ENCODE measurements at regions of chr10 and their contacts with region 1.

Region 1: DNA sequence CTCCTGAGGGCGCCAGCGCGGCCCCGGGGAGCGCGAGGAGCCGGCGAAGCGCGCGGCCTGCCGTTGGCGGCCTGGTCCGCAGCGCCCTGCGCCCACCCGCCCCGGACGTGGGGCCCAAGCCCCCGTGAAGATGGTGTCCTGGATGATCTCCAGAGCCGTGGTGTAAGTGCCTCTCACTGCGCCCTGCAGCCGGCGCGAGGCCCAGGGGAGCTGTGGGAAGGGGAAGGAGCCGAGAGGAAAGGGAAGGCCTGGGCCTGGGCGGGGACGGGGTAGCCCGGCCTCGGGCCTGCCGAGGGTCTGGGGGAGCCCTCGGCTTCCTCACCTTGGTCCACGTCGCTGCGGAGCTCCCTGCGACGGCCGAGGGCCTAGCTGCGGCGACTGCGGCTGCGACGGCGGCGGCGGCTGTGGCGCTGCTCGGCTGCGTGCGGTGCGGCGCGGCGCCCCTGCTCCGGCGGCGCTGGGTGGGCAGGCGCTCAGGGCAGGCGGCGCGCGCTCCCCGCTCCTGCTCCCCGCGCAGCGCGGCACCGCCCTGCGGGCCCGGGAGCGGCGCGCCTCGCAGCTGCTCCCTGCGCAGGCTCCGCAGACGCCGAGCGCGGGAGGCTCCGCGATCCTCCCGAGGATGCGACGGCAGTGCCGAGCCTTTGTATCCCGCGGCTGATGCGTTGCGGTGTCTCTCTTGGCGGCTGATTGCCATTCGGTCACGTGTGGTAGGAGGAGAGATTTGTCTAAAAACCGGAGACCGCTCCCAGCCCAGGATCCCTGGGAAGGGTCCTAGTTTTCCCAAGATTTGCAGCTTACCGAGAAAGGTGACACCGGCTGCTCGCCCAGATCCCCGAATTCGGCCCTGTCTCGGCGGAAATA is 445 bp downstream of the REEP3 start:
- DNase-seq: peak; percentile 80
- H3K4me3 ChIP-seq: peak overlapping the region; percentile 50 to 93 (median 62)
- H3K27ac ChIP-seq: peak overlapping the region; percentile 90
- H3K4me1 ChIP-seq: peaks cover 7% of the 10 kb centered on the region
- H3K27me3 ChIP-seq: no peaks in the 10 kb centered on the region
- CTCF ChIP-seq: no peak
- POLR2A ChIP-seq: peak; percentile 74

Region 2: DNA sequence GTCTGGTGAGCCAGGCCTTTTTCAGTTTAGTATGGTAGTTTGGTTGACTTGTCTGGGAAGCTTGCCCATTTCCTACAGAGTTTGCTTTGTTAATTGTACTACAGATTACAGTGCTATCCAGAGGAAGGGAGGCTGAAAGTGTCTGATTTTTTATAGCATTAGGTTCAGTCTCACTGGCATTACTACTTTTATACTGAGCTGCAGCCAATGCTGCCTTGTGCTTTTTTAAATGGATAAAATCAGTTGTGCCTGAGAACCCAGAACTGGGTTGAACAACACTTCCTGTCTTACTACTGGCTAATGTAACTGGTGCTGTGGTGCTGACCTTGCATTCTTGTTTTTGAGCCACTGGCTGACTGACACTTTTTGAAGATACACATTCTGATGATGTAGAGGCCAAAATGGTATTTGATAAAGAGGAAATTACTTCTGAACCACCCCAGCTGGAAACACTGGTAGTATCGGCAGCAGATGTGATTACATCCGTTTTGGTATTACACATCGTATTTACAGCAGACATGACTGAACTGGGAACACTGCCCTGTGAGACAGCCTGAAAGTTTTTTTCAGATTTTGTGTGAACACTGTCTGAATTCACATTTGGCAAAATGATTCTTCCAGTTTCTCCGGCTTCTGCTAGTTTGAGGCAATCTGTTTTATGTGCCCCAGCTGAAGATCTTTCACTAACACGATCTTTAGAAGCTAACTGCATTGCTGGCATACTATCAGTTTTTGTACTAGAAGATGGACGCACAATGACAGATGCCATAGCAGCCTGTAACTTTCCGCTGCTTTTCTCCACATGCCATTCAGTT is 314.4 kb before region 1 on chr10:
- CTCF ChIA-PET with region 1: no interaction called
- POLR2A ChIA-PET with region 1: no interaction called
- dilution Hi-C with region 1: no loop called
- intact Hi-C with region 1: loop called (anchors 5 kb)
- DNase-seq: peak; percentile 96
- H3K4me3 ChIP-seq: no peak overlapping the region
- H3K27ac ChIP-seq: peak overlapping the region; percentile 87
- H3K4me1 ChIP-seq: peaks cover 54% of the 10 kb centered on the region
- H3K27me3 ChIP-seq: no peaks in the 10 kb centered on the region
- CTCF ChIP-seq: no peak
- POLR2A ChIP-seq: no peak

Region 3: GRCh38 chr10:63573068-63573697 is 51.5 kb after region 1 on chr10:
- CTCF ChIA-PET with region 1: no interaction called
- POLR2A ChIA-PET with region 1: no interaction called
- dilution Hi-C with region 1: no loop called
- intact Hi-C with region 1: loop called (anchors 2 kb)
- DNase-seq: peak; percentile 95
- H3K4me3 ChIP-seq: peak overlapping the region in 1 of 3 experiments; percentile 16
- H3K27ac ChIP-seq: peak overlapping the region; percentile 68
- H3K4me1 ChIP-seq: peaks cover 33% of the 10 kb centered on the region
- H3K27me3 ChIP-seq: no peaks in the 10 kb centered on the region
- CTCF ChIP-seq: no peak
- POLR2A ChIP-seq: no peak

Measured in endothelial cell of umbilical vein (primary cell).